Body of pancreas (tissue), 4 donors: ENCODE measurements at regions of chr7 and their contacts with region 1.

Region 1: GRCh38 chr7:55483046-55483445 is 89.3 kb downstream of the VOPP1 start:
- DNase-seq: no peak
- ATAC-seq: no peak
- H3K4me3 ChIP-seq: no peak overlapping the region
- H3K27ac ChIP-seq: no peak overlapping the region
- H3K4me1 ChIP-seq: no peaks in the 10 kb centered on the region
- H3K27me3 ChIP-seq: no peaks in the 10 kb centered on the region
- CTCF ChIP-seq: no peak
- POLR2A ChIP-seq: no peak

Region 2: DNA sequence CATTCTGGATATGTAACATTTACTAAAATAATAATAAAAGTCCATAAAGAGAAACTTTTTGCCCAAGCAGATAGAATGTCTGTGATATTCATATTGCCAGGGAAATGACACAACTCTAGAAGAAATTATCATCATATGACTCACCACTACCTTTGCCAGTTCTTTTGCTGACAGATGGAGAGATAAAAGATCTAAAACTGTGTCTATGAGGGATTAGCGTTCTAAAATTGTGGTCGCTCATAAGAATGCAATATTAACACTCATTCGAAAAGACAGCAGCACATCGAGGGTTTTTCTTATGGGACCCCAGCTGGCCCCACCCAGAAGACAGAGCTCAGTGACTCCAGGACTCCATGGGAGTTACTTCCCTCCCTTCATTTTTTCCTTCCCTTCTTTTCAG is 134.5 kb before region 1 on chr7:
- intact Hi-C with region 1: no loop called
- DNase-seq: no peak
- ATAC-seq: no peak
- H3K4me3 ChIP-seq: no peak overlapping the region
- H3K27ac ChIP-seq: no peak overlapping the region
- H3K4me1 ChIP-seq: no peaks in the 10 kb centered on the region
- H3K27me3 ChIP-seq: no peaks in the 10 kb centered on the region
- CTCF ChIP-seq: no peak
- POLR2A ChIP-seq: no peak

Region 3: GRCh38 chr7:55423277-55423711 is 59.8 kb before region 1 on chr7:
- intact Hi-C with region 1: loop called (anchors 10 kb)
- DNase-seq: no peak
- ATAC-seq: no peak
- H3K4me3 ChIP-seq: no peak overlapping the region
- H3K27ac ChIP-seq: no peak overlapping the region
- H3K4me1 ChIP-seq: no peaks in the 10 kb centered on the region
- H3K27me3 ChIP-seq: no peaks in the 10 kb centered on the region
- CTCF ChIP-seq: no peak
- POLR2A ChIP-seq: no peak